ENCODE measurements at regions of chr6 and their contacts with region 1.

Region 1: DNA sequence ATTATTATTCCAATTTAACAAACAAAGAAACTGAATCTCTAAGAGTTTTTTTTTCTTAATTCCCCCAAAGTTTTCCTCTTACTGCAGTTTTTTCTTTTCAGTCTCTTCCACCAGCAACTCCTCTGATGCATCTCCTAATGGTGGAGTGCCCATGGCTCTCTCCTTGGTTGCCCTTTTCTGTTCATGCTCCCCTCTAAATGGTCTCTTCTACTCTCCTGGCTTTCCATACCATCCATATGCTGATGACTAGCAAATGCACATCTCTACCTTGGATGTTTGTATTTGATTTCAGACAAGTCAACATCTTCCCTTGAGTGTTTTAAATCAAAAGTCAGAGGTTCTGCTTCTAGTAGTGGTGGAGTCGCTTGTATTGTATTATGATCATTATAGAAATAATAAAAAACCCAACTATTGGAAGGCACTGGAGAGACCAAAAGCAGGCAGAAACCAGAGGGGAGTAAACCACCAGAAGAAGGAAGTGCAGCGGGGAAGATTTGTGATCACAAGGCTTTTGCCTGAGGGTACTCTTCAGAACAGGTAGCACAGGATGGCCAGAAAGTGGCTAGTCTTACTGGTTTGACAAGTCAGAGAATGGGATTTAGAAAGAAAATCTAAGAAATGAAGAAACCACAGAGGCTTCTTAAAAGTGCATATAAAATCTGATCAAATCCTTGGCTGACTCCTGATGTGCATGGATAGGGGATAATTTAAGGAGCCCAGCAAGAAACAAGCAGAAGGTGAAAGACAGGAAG is 23.8 kb downstream of the MAPK13 start:
- DNase-seq: peak; percentile 65 to 92
- H3K4me3 ChIP-seq: peak overlapping the region; percentile 10; the same call in 1 of the 2 replicates
- H3K27ac ChIP-seq: peak overlapping the region; percentile 62
- H3K4me1 ChIP-seq: peaks cover 38% of the 10 kb centered on the region
- H3K27me3 ChIP-seq: no peaks in the 10 kb centered on the region
- CTCF ChIP-seq: no peak

Region 2: GRCh38 chr6:36131511-36132245 is 22.5 kb before region 1 on chr6:
- CTCF ChIA-PET with region 1: no interaction called
- POLR2A ChIA-PET with region 1: no interaction called
- intact Hi-C with region 1: loop called (anchors 2 kb)
- DNase-seq: peak; percentile 57 to 69
- H3K4me3 ChIP-seq: peak overlapping the region; percentile 73
- H3K27ac ChIP-seq: peak overlapping the region; percentile 64
- H3K4me1 ChIP-seq: peaks cover 50% of the 10 kb centered on the region
- H3K27me3 ChIP-seq: no peaks in the 10 kb centered on the region
- CTCF ChIP-seq: no peak

Region 3: DNA sequence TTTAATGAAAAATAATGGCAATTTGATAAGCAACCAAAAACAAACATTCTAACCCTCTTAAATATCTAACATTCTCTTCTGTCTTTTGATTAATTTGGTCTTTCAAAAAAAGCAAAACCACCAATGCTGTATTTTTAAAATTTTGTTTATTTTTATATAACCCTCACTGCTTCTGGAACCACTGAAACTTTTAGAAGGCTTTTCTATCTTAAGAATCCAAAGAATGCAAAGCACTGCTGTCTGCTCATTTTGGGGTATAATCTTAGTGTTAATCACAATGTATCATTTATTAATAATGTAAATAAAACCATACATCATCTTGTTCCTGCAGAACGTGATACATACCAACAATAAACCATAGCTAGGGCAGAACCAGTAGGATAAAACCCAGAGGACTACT is 379.2 kb after region 1 on chr6:
- CTCF ChIA-PET with region 1: no interaction called
- POLR2A ChIA-PET with region 1: no interaction called
- intact Hi-C with region 1: no loop called
- DNase-seq: no peak
- H3K4me3 ChIP-seq: no peak overlapping the region
- H3K27ac ChIP-seq: no peak overlapping the region
- H3K4me1 ChIP-seq: no peaks in the 10 kb centered on the region
- H3K27me3 ChIP-seq: no peaks in the 10 kb centered on the region
- CTCF ChIP-seq: no peak

Measured in PC-9 (cell line).